CD8-positive, alpha-beta T cell (primary cell): ENCODE measurements at regions of chr4 and their contacts with region 1.

Region 1: DNA sequence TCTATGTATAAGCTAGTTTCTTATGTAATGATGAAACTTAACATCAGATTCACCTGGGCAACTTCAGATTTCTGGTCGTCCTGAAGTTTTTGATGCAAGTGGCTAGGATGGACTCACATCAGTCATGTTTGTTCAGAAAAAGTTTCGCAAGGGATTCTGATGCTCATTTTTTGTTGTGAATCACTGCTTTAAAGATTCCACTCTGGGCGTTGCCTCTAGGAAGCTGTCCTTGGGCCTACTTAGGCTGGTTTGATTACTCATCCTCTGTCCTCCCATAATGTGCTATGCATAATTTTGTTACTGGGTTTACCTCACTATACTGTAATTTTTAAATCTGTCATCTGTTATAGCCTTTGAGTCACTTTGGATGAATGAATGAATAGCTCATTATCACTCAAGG is 30.8 kb downstream of the HERC3 start:
- DNase-seq: no peak
- ATAC-seq: no peak
- H3K4me3 ChIP-seq: no peak overlapping the region
- H3K4me3 Mint-ChIP-seq: no peak overlapping the region
- H3K27ac ChIP-seq: no peak overlapping the region
- H3K27ac Mint-ChIP-seq: no peak overlapping the region
- H3K4me1 ChIP-seq: no peaks in the 10 kb centered on the region
- H3K4me1 Mint-ChIP-seq: peaks cover 52% of the 10 kb centered on the region
- H3K27me3 ChIP-seq: no peaks in the 10 kb centered on the region
- H3K27me3 Mint-ChIP-seq: no peaks in the 10 kb centered on the region
- CTCF ChIP-seq: no peak

Region 2: DNA sequence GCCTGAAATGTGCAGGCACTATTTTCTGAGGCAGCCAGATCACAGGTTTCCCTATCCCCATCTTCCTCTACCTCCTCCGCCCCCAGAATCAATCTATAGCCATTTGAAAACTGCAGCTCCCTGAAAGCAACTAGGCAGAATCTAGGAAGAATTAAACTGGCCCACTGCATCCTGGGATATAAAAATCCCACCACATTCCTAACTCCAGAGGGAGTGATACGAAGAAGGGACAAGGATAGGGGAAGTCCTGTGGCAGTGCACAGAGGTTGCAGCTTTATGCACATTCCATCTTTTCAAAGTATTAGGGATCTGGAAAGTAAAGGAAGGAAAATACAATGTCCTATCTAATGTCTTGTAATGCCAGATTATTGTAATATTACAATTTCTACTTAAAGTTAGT is 49.1 kb before region 1 on chr4:
- CTCF ChIA-PET with region 1: no interaction called
- POLR2A ChIA-PET with region 1: no interaction called
- intact Hi-C with region 1: loop called in 1 of 2 experiments (anchors 10 kb)
- DNase-seq: no peak
- ATAC-seq: no peak
- H3K4me3 ChIP-seq: no peak overlapping the region
- H3K4me3 Mint-ChIP-seq: no peak overlapping the region
- H3K27ac ChIP-seq: no peak overlapping the region
- H3K27ac Mint-ChIP-seq: no peak overlapping the region
- H3K4me1 ChIP-seq: no peaks in the 10 kb centered on the region
- H3K4me1 Mint-ChIP-seq: no peaks in the 10 kb centered on the region
- H3K27me3 ChIP-seq: no peaks in the 10 kb centered on the region
- H3K27me3 Mint-ChIP-seq: peaks cover 7% of the 10 kb centered on the region
- CTCF ChIP-seq: no peak

Region 3: GRCh38 chr4:88653371-88653946 is 30.4 kb after region 1 on chr4:
- CTCF ChIA-PET with region 1: no interaction called
- POLR2A ChIA-PET with region 1: no interaction called
- intact Hi-C with region 1: no loop called
- DNase-seq: no peak
- ATAC-seq: no peak
- H3K4me3 ChIP-seq: no peak overlapping the region
- H3K4me3 Mint-ChIP-seq: no peak overlapping the region
- H3K27ac ChIP-seq: no peak overlapping the region
- H3K27ac Mint-ChIP-seq: peak overlapping the region; percentile 56
- H3K4me1 ChIP-seq: no peaks in the 10 kb centered on the region
- H3K4me1 Mint-ChIP-seq: peaks cover 30% of the 10 kb centered on the region
- H3K27me3 ChIP-seq: no peaks in the 10 kb centered on the region
- H3K27me3 Mint-ChIP-seq: no peaks in the 10 kb centered on the region
- CTCF ChIP-seq: no peak